ENCODE measurements at regions of chr15 and their contacts with region 1.

Region 1: DNA sequence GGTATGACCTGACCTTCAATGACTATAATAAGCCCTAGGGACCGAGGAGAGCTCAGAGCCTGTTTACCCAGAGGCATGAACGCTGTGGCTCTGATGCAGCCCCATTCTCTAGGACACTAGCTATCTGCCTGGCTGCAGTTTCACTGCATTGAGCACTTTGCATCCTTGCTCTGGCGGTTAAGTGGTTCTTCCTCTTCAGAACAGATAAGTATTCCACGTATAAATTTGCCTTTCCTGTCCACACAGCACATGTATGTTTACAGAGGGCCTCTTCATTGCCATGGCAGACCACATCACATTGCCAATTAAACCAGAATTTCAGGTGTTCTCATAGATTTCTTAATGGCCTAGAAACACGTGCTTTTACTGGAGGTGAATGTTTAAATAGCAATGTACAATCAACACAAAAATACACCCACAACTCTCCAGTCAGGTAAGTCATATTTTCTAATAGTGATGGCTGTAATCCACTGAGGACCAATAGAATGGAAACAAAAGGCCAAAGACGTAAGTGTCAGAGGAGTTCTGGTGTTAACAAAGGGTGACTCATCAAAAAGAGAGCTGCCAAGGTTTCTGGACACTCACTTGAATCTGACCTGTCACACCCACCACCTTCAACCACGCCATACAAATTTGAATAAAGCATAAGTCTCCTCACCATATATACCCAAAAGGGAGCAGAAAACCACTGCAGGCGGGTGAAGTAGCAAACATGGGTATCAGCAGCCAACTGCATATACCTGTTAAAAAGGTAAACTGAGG is 553.4 kb downstream of the OCA2 start:
- DNase-seq: no peak
- ATAC-seq: no peak

Region 2: GRCh38 chr15:27601239-27601960 is 55.7 kb after region 1 on chr15:
- intact Hi-C with region 1: loop called (anchors 10 kb)
- DNase-seq: no peak
- ATAC-seq: no peak

Measured in left ventricle myocardium superior (tissue), 1 donor.